ENCODE measurements at regions of chr12 and their contacts with region 1.

Region 1: DNA sequence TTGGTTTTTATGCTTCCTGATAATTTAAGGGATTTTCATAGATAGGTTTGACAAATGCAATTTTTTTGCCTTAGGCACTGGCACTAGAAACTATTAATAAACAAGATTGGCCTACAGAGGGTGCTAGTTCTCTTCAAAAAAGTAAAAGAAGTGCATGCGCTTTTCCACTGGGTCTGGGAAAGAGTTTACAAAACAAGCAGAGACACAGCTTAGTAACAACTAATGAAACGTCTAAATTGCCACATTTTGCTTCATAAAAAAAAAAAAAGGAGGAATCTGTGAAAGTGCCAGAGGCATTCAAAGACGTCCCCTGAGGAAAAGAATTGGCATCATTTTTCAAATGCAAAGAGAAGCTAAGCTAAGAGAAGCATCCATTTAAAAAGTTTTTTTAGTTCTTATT is 58.3 kb upstream of the EEA1 start:
- DNase-seq: peak in 4 of 5 donors; percentile 52 to 61 (median 57)
- H3K4me3 ChIP-seq: no peak overlapping the region
- H3K4me3 Mint-ChIP-seq: peak overlapping the region in 3 of 8 donors; percentile 27 to 33 (median 30)
- H3K27ac ChIP-seq: no peak overlapping the region
- H3K27ac Mint-ChIP-seq: peak overlapping the region in 1 of 7 donors; percentile 9
- H3K4me1 ChIP-seq: peaks cover 7% of the 10 kb centered on the region
- H3K4me1 Mint-ChIP-seq: peaks cover 8 to 11% (median 9%) of the 10 kb centered on the region in 4 donors
- H3K27me3 ChIP-seq: no peaks in the 10 kb centered on the region
- H3K27me3 Mint-ChIP-seq: no peaks in the 10 kb centered on the region

Region 2: GRCh38 chr12:92784795-92785562 is 202.4 kb before region 1 on chr12:
- CTCF ChIA-PET with region 1: interaction called, 11 read pairs
- POLR2A ChIA-PET with region 1: no interaction called
- intact Hi-C with region 1: loop called (anchors 1 kb)
- DNase-seq: peak; percentile 54 to 73 (median 67)
- H3K4me3 ChIP-seq: no peak overlapping the region
- H3K4me3 Mint-ChIP-seq: no peak overlapping the region
- H3K27ac ChIP-seq: no peak overlapping the region
- H3K27ac Mint-ChIP-seq: peak overlapping the region in 1 of 7 donors; percentile 4
- H3K4me1 ChIP-seq: no peaks in the 10 kb centered on the region
- H3K4me1 Mint-ChIP-seq: peaks cover 0 to 4% (median 2%) of the 10 kb centered on the region in 4 donors
- H3K27me3 ChIP-seq: no peaks in the 10 kb centered on the region
- H3K27me3 Mint-ChIP-seq: no peaks in the 10 kb centered on the region

Region 3: DNA sequence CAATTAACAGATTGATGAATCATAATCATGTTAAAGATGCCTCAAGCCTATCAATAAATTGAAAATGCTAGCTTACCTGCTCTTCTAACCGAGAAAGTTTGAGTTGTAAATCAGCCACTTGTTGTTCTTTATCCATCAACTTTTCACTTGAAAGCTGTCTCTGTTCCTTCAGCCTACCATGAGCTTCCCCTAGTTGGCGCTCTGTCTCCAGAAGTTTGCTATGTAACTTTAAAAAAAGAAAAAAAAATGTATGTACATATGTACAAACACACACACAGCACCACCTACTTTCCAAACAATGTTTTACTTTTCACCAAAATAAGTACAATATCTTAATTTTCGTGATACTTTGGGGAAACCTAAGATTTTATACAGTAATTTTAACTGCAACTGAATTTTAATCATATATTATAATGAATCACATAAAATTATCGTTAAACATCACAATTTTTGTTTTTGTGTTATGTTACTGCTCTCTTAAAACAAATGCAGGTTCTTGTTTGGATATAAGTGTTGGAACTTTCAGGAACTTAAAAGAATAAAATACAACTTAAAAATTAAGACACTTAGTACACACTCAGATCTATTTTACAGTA is 159.4 kb before region 1 on chr12:
- CTCF ChIA-PET with region 1: interaction called, 3 read pairs
- POLR2A ChIA-PET with region 1: no interaction called
- intact Hi-C with region 1: loop called (anchors 5 kb)
- DNase-seq: peak in 4 of 5 donors; percentile 19 to 31 (median 26)
- H3K4me3 ChIP-seq: no peak overlapping the region
- H3K4me3 Mint-ChIP-seq: no peak overlapping the region
- H3K27ac ChIP-seq: no peak overlapping the region
- H3K27ac Mint-ChIP-seq: no peak overlapping the region
- H3K4me1 ChIP-seq: no peaks in the 10 kb centered on the region
- H3K4me1 Mint-ChIP-seq: peaks cover 0 to 5% (median 0%) of the 10 kb centered on the region in 4 donors
- H3K27me3 ChIP-seq: no peaks in the 10 kb centered on the region
- H3K27me3 Mint-ChIP-seq: no peaks in the 10 kb centered on the region

Region 4: GRCh38 chr12:92974759-92975158 is 12.6 kb before region 1 on chr12:
- CTCF ChIA-PET with region 1: interaction called, 13 read pairs
- POLR2A ChIA-PET with region 1: no interaction called
- intact Hi-C with region 1: no loop called
- DNase-seq: no peak
- H3K4me3 ChIP-seq: no peak overlapping the region
- H3K4me3 Mint-ChIP-seq: no peak overlapping the region
- H3K27ac ChIP-seq: no peak overlapping the region
- H3K27ac Mint-ChIP-seq: no peak overlapping the region
- H3K4me1 ChIP-seq: no peaks in the 10 kb centered on the region
- H3K4me1 Mint-ChIP-seq: peaks cover 0 to 7% (median 5%) of the 10 kb centered on the region in 4 donors
- H3K27me3 ChIP-seq: no peaks in the 10 kb centered on the region
- H3K27me3 Mint-ChIP-seq: peaks cover 2 to 7% of the 10 kb centered on the region in 2 donors

Region 5: DNA sequence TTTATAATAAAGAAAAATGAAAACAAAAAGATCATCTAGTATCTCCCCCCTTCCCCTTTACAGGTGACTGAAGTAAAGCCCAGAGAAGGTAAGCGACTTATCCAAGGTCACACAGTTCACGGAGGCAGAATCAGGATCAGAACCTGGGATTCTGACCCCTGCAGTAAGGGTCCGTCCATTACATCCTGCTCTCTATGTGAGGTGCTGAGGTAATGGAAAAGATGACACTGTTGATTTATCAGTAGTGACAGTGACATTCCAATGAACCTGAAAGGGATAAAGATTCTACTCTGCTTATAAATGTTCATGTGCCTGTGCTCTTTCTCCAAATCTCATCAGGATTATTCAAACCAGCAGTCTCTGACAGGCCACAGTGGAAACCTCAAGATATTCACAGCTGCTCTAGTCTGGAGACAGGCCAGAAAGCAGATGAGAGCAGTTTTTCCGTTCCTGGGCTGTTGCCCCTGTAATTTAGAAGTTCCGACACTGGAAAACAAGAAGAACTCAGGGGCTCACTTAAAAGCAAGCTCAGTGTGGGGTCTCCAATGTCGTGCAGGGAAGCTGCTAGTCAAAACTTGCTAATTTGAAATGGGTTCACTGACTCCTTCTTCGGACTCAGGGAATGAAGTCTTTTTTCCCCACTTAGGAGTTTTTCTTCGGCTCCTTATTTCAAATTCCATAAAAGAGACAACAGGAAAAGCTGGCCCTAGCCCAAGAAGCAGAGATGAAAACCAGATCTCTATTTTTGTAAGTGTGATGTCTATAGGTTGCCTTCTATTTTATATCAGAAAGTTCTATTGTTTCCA is 73.5 kb after region 1 on chr12:
- CTCF ChIA-PET with region 1: no interaction called
- POLR2A ChIA-PET with region 1: no interaction called
- intact Hi-C with region 1: no loop called
- DNase-seq: no peak
- H3K4me3 ChIP-seq: no peak overlapping the region
- H3K4me3 Mint-ChIP-seq: no peak overlapping the region
- H3K27ac ChIP-seq: no peak overlapping the region
- H3K27ac Mint-ChIP-seq: no peak overlapping the region
- H3K4me1 ChIP-seq: no peaks in the 10 kb centered on the region
- H3K4me1 Mint-ChIP-seq: peaks cover 0 to 1% (median 0%) of the 10 kb centered on the region in 4 donors
- H3K27me3 ChIP-seq: no peaks in the 10 kb centered on the region
- H3K27me3 Mint-ChIP-seq: peaks cover 14 to 28% of the 10 kb centered on the region in 2 donors

Region 6: DNA sequence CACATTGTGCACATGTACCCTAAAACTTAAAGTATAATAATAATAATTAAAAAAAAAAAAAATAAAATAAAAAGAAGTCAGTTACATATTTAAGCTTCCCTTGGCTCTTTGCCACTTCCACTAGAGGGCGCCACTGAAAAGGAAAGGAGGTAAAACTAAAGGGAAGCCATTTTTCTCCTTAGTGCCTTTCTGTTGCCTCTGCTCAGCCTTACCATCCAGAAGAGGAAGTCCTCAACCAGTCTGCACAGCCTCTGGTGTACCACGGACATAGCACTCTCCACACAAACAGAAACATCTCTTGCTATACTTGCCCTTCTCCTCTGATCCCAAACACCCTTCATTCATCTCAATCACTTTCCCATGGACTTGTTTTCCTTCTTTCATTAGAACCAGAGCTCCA is 110.7 kb after region 1 on chr12:
- CTCF ChIA-PET with region 1: interaction called, 19 read pairs
- POLR2A ChIA-PET with region 1: no interaction called
- intact Hi-C with region 1: no loop called
- DNase-seq: peak; percentile 50 to 66 (median 54)
- H3K4me3 ChIP-seq: no peak overlapping the region
- H3K4me3 Mint-ChIP-seq: peak overlapping the region in 2 of 8 donors; percentile 12 to 46
- H3K27ac ChIP-seq: no peak overlapping the region
- H3K27ac Mint-ChIP-seq: peak overlapping the region in 1 of 7 donors; percentile 2
- H3K4me1 ChIP-seq: no peaks in the 10 kb centered on the region
- H3K4me1 Mint-ChIP-seq: peaks cover 6 to 10% (median 6%) of the 10 kb centered on the region in 4 donors
- H3K27me3 ChIP-seq: no peaks in the 10 kb centered on the region
- H3K27me3 Mint-ChIP-seq: no peaks in the 10 kb centered on the region

Region 7: DNA sequence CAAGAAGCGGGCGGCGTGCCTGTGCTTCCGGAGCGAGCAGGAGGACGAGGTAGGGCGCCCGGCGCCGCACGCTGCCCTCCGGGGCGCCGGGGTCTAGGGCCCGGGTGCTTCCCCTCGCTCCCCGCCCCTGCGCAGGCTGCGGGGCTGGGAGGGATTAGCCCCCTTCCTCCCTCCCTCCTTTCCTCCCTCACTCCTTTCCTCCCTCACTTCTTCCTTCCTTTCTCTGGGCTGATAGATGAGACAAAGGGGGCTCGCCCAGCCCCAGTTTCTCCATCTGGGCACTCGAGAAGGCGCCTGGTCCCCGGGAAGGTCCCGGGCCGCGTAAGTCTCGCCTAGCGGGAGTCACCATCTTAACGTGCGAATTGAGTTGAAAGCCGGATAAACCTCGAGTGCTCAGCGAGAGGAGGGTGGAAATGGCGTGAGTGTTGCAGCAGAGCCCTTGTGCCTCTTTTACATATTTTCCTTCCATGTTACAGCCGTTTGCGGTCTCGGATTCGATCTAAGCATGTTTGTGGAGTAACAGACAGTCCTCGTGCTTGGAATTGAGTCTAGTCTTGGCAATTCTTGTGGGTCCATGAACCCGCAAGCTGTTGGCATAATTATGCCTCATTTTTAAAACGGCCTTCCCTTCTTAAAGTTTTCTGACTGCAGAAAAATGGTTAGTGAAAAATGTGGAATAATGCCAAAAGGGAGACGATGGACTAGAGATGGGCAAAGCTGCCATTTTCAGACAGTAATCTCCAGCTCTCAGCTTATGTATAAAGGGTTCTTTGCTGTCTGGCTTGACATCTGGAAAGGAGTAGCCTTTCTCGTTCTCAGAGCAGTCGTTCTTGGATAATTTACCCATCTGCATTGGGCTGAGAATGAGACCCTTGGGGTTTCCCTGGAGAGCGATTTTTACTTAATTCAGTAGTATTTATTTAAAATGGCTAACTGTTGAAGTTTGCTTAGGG is 391.3 kb after region 1 on chr12:
- CTCF ChIA-PET with region 1: interaction called, 12 read pairs
- POLR2A ChIA-PET with region 1: interaction called, 3 read pairs
- intact Hi-C with region 1: no loop called
- DNase-seq: peak; percentile 63 to 73 (median 69)
- H3K4me3 ChIP-seq: peak overlapping the region; percentile 71 to 88
- H3K4me3 Mint-ChIP-seq: peak overlapping the region; percentile 98 to 100 (median 99)
- H3K27ac ChIP-seq: peak overlapping the region; percentile 84
- H3K27ac Mint-ChIP-seq: peak overlapping the region; percentile 96 to 100 (median 99)
- H3K4me1 ChIP-seq: peaks cover 43% of the 10 kb centered on the region
- H3K4me1 Mint-ChIP-seq: peaks cover 28 to 57% (median 43%) of the 10 kb centered on the region in 4 donors
- H3K27me3 ChIP-seq: no peaks in the 10 kb centered on the region
- H3K27me3 Mint-ChIP-seq: no peaks in the 10 kb centered on the region

Region 8: DNA sequence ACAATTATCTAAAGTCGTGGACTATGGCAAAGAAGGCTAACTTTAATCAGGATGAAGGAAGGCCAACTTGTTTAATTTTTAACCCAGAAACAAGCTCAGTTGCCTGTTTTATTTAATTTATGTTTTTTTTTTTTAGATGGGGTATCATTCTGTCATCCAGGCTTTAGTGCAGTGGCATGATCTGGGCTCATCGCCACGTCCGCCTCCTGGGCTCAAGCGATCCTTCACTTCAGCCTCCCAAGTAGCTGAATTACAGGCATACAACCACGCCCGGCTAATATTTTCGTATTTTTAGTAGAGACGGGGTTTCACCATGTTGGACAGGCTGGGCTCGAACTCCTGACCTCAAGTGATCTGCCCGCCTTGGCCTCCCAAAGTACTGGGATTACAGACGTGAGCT is 410.1 kb after region 1 on chr12:
- CTCF ChIA-PET with region 1: interaction called, 90 read pairs
- POLR2A ChIA-PET with region 1: interaction called, 3 read pairs
- intact Hi-C with region 1: loop called (anchors 1 kb)
- DNase-seq: no peak
- H3K4me3 ChIP-seq: no peak overlapping the region
- H3K4me3 Mint-ChIP-seq: no peak overlapping the region
- H3K27ac ChIP-seq: no peak overlapping the region
- H3K27ac Mint-ChIP-seq: no peak overlapping the region
- H3K4me1 ChIP-seq: no peaks in the 10 kb centered on the region
- H3K4me1 Mint-ChIP-seq: peaks cover 0 to 7% (median 0%) of the 10 kb centered on the region in 4 donors
- H3K27me3 ChIP-seq: no peaks in the 10 kb centered on the region
- H3K27me3 Mint-ChIP-seq: no peaks in the 10 kb centered on the region

Measured in CD4-positive, alpha-beta memory T cell (primary cell).